ENCODE measurements at regions of chr10 and their contacts with region 1.

Region 1: GRCh38 chr10:46299536-46300369 is 13.0 kb downstream of the ANTXRL start:
- DNase-seq: peak; percentile 84
- H3K4me3 ChIP-seq: no peak overlapping the region
- H3K27ac ChIP-seq: peak overlapping the region; percentile 67
- H3K4me1 ChIP-seq: peaks cover 49% of the 10 kb centered on the region
- CTCF ChIP-seq: no peak

Region 2: DNA sequence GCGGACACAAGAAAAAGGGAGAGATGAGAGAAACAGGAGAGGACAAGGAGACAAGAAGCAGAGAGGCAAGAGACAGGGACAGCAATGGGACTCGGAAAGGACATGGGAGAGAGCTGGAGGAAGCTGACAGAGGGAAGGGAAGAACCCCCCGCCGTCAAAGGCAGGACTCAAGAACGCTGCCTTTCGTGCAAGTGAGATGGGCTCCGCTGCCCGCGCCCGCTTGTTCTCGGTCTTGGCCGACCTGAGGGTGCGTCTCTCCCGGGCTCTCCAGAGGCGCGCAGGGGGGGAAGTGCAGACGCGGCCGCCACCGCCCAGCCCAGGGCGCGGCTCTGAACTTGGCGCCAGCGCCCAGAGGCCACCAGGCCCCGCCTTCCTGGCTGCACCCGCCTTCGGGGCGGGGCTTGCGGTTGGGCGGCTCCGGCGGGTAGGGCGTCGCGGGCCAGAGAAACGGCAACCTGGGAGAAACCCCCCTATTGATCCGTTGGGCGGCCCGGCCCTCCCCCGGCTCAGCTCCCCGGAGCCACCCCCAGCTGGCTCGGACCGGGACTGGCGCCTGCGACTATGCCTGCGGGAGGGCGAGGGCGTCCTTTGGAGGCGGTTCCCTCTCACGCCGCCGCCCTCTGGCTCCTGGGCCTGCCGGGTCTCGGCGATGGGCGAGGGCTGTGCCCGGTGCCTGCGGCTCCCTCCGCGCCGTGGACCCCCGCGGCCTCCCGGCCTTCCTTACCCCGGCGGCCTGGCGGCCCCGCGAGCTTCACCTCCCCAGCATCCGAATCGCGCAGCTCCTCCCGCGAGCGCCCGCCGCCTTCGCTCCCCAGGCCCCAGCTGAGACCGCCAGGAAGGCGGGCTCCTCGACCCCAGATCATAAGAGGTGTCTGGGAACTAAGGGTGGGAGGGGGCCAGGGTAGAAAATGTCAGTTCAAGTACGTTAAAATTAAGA is 15.2 kb before region 1 on chr10:
- CTCF ChIA-PET with region 1: interaction called, 3 read pairs
- POLR2A ChIA-PET with region 1: interaction called, 9 read pairs
- intact Hi-C with region 1: loop called (anchors 1 kb)
- DNase-seq: peak; percentile 89
- H3K4me3 ChIP-seq: peak overlapping the region; percentile 71
- H3K27ac ChIP-seq: peak overlapping the region; percentile 39
- H3K4me1 ChIP-seq: peaks cover 27% of the 10 kb centered on the region
- CTCF ChIP-seq: no peak